PC-3 (cell line): ENCODE measurements at regions of chr11 and their contacts with region 1.

Region 1: DNA sequence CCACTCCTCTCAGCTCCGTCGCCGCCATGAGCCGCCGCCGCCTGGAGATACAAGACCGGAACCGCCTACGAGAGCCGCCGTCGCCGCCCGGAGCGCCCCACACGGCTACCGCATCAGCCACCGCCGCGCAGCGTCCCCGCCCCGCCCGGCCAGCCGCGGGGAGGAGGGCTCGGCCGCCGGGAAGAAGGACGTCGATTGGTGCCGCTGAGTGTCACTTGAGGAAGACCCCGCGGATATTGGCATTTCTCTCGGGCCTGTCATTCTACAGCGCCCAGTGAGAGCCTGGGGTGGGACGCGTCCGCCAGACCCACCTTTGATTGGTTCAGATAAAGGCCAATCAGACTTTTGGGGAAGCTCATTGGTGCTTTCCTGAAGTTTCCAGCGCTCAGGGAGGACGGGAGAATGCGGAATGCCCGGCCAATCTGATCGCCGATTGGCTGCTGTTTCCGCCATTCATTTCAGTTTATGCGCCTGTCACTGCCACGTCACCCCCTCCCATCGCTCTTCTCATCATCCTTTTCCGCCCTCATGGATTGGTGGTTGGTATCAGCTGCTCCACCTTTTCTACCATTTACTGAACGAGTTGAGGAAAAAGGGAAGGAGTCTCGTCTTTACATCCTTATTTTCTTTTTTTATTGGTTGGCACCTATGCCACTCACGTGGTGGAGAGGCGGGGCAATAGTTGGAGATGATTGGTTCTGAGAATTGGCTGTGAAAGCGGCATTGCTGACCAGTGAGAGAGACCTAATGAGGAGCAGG is at the start of gene OSBP:
- DNase-seq: peak; percentile 100
- ATAC-seq: peak; percentile 86
- H3K4me3 ChIP-seq: peak within 1 kb of the TSS; percentile 95
- H3K27ac ChIP-seq: peak within 1 kb of the TSS; percentile 35
- H3K4me1 ChIP-seq: peaks cover 39% of the 10 kb centered on the region
- H3K27me3 ChIP-seq: no peaks in the 10 kb centered on the region
- CTCF ChIP-seq: no peak
- total RNA-seq, gene OSBP: 36.3 and 59.4 TPM in 2 replicates

Region 2: DNA sequence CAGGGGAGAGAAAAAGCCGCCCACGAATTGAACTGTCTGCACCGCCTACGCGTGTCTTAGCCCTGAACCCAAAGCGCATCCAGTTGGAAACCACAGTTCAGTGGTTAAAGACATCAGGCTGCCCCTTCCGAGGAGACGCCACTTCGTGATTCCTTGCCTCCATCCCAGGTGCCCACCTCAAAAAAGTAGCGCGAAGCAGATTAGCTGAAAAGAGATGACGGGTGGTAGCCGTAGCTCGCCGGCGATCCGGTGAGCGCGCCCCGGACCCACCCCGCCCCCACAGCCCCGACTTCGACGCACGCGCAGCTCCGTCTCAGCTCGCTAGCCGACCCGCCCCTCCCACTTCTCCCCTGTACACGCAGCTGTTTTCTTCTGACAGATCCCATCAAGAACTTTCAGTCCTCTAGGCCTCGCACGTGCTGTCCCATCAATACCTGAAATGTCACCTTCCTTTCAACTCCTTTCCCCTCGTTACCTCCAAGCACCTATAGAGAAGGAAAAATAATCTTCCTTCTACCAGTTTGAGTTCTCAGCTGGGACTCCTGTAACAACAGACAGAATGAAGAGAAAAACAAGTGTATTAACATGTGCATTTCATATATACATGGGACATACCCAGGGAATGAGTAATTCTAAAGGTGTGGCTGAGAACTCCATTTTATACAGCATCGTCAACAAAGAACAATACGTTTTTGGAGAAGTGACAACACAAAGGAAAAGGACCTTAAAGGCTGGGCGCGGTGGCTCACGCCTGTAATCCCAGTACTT is 54.9 kb before region 1 on chr11:
- CTCF ChIA-PET with region 1: no interaction called
- POLR2A ChIA-PET with region 1: no interaction called
- intact Hi-C with region 1: loop called (anchors 1 kb)
- DNase-seq: peak; percentile 95
- ATAC-seq: peak; percentile 64
- H3K4me3 ChIP-seq: peak overlapping the region; percentile 96
- H3K27ac ChIP-seq: peak overlapping the region; percentile 89
- H3K4me1 ChIP-seq: peaks cover 6% of the 10 kb centered on the region; the same call in 1 of the 2 replicates
- H3K27me3 ChIP-seq: no peaks in the 10 kb centered on the region
- CTCF ChIP-seq: no peak

Region 3: DNA sequence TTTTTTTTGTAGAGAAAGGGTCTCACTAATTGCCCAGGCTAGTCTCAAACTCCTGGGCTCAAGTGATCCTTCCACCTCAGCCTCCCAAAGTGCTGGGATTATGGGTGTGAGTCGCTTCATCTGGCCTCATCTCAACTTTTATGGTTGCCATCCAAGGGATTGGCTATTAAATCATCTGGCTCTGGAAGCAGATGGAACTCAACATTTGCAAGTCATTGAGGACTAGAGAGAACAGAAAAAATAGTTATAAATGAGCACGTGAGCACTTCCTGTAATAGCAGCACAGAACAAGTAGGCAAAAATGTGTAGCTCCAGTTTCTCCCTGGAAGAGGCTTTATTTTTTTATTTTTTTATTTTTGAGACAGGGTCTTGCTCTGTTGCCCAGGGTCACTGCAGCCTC is 75.3 kb after region 1 on chr11:
- CTCF ChIA-PET with region 1: no interaction called
- POLR2A ChIA-PET with region 1: no interaction called
- intact Hi-C with region 1: no loop called
- DNase-seq: no peak
- ATAC-seq: no peak
- H3K4me3 ChIP-seq: no peak overlapping the region
- H3K27ac ChIP-seq: no peak overlapping the region
- H3K4me1 ChIP-seq: no peaks in the 10 kb centered on the region
- H3K27me3 ChIP-seq: no peaks in the 10 kb centered on the region
- CTCF ChIP-seq: no peak